ENCODE measurements at regions of chr2 and their contacts with region 1.

Region 1: DNA sequence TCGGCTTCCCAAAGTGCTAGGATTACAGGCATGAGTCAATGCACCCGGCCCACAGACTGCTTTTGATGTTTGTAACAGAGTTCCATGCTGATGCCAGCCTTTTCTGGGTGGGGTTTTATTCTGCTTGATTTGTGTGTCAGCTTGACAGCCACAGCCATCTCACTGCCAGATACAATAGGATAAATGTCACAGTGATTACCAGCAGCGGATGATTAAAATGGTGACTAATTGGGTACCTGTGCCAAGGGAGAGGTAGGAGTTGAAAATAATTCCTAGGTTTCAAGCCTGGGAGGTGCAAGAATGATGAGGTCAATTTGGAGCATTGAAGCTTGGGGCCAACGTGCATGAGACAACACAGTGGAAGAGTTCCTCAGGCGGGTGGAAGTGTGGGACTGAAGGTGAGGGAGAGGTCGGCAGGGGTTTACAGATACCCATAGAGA is 39.4 kb downstream of the SH2D6 start:
- DNase-seq: peak; percentile 95
- ATAC-seq: peak; percentile 81
- H3K4me3 ChIP-seq: peak overlapping the region in 1 of 2 experiments; percentile 20; a peak in 1 of 4 replicates
- H3K27ac ChIP-seq: peak overlapping the region; percentile 85
- H3K4me1 ChIP-seq: peaks cover 53 to 69% of the 10 kb centered on the region in 2 experiments
- H3K27me3 ChIP-seq: no peaks in the 10 kb centered on the region
- CTCF ChIP-seq: no peak
- POLR2A ChIP-seq: no peak
- RAD21 ChIP-seq: no peak; the same call in 1 of the 2 replicates

Region 2: DNA sequence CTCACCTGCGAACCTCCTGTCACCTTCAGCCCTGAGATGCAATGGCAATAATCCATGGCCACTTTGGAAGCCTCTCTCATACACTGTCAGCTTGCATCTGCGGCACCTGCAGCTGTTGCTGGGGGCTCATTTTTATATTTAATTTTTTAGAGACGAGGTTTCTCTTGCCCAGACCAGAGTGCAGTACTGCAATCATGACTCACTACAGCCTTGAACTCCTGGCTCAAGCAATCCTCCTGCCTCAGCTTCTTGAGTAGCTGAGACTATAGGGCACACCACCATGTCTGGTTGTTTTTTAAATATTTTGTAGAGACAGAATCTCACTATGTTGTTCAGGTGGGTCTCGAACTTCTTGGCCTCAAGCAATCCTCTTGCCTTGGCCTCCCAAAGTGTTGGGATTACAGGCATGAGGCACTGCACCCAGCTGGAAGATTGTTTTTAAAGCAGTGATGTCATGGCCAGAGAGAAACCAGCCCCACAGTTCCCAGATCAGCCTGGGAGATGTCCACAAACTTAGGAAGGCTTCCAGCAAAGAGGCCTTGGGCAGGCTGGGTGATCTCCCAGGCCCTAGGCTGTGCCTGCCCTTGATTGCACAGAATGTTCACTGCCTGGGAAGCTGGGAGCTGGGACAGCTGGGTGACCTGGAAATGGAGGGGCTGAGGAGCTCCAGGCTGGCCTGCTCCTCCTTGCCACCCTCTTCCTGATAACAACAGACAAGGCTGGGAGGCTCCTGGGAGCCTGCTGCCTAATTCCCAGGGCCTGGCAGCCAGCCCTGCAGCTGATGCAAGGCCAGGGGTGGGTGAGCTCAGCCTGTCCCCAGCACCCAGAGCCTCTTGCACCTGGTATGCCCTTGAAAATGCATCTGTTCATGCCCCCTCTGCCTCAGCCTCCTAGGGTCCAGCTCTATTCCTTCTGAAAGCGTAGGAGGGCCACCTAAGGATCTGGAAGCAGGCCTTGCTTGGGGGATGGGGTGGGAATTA is 12.3 kb before region 1 on chr2:
- CTCF ChIA-PET with region 1: no interaction called
- POLR2A ChIA-PET with region 1: interaction called, 23 read pairs
- RAD21 ChIA-PET with region 1: no interaction called
- intact Hi-C with region 1: no loop called
- DNase-seq: no peak
- ATAC-seq: peak; percentile 53; the same call in 1 of the 2 replicates
- H3K4me3 ChIP-seq: no peak overlapping the region
- H3K27ac ChIP-seq: peak overlapping the region; percentile 46; the same call in 1 of the 2 replicates
- H3K4me1 ChIP-seq: peaks cover 22 to 26% of the 10 kb centered on the region in 2 experiments
- H3K27me3 ChIP-seq: no peaks in the 10 kb centered on the region
- CTCF ChIP-seq: no peak
- POLR2A ChIP-seq: no peak
- RAD21 ChIP-seq: no peak

Region 3: DNA sequence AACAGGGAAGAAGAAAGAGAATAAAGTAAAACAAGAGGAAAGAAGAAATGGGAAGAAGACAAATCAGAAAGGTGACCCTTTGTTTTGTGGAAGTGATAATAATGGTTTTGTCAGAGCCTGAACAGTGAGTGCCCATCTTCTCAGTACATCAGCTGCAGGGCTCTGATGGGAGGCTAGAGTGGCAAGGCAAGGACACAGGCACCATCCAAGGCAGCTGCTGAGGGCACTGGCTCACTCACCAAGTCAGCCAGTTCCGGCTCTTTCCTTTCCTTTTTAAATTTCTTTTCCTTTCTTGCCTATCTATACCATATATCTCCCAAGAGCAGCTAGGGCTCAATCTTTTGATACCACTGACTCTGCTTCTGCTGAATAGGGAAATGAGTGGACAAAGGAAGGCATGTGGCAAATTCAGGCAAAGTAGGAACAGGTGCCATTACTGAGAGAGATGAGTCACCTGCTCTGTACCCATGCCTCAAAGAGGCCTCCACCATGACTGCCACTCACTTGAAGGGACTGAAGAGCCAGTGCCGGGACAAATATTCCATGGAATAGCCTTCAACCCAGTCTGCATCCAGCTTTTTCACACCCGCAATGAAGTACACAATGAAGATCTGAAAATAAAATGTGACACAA is 97.2 kb after region 1 on chr2:
- CTCF ChIA-PET with region 1: no interaction called
- POLR2A ChIA-PET with region 1: no interaction called
- RAD21 ChIA-PET with region 1: no interaction called
- intact Hi-C with region 1: no loop called
- DNase-seq: no peak
- ATAC-seq: no peak
- H3K4me3 ChIP-seq: no peak overlapping the region
- H3K27ac ChIP-seq: no peak overlapping the region
- H3K4me1 ChIP-seq: peaks cover 0 to 4% of the 10 kb centered on the region in 2 experiments; a peak in 3 of 4 replicates
- H3K27me3 ChIP-seq: no peaks in the 10 kb centered on the region
- CTCF ChIP-seq: no peak
- POLR2A ChIP-seq: no peak
- RAD21 ChIP-seq: no peak

Measured in HCT116 (cell line).